Activated CD8-positive, alpha-beta memory T cell treated with anti-CD3 and anti-CD28 coated beads, Interleukin-2, amount 10 ng/mL, durations not matched to agents 7 days and 5 days (primary cell): ENCODE measurements at regions of chr19 and their contacts with region 1.

Region 1: DNA sequence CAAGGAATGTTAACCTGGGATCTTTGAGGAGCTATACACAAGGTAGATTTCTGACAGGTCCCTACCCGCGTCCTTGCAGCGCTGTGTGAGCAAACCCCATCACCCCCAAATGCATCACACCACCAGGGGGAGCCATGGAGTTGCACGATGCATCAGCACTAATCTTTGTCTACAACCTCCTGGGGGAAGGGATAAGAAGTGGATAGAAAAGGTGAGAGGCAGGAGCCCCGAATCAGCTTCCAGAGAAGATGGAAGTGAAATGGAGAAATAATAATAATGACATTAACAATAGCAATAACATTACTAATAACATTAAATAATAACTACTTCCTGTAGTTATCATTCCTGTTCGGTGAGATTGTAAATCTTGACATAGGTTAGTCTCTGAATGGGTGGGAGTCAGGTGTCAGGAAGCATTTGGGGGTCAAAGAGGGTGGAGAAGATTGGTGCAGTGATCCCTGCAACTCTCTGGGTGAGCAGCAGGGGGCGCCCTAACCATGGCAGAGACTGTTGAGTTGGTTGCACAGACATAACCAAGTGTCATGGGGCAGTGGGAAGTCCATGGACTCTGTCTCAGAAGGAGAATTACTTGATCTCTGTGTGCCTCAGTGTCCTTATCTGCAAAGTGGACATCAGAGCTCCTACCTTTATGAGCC is 16.5 kb downstream of the SIGLEC7 start:
- DNase-seq: peak; percentile 89
- ATAC-seq: peak; percentile 87
- H3K4me3 Mint-ChIP-seq: no peak overlapping the region
- H3K27ac Mint-ChIP-seq: peak overlapping the region; percentile 53
- H3K4me1 Mint-ChIP-seq: peaks cover 40% of the 10 kb centered on the region
- H3K27me3 Mint-ChIP-seq: peaks cover 48% of the 10 kb centered on the region

Region 2: DNA sequence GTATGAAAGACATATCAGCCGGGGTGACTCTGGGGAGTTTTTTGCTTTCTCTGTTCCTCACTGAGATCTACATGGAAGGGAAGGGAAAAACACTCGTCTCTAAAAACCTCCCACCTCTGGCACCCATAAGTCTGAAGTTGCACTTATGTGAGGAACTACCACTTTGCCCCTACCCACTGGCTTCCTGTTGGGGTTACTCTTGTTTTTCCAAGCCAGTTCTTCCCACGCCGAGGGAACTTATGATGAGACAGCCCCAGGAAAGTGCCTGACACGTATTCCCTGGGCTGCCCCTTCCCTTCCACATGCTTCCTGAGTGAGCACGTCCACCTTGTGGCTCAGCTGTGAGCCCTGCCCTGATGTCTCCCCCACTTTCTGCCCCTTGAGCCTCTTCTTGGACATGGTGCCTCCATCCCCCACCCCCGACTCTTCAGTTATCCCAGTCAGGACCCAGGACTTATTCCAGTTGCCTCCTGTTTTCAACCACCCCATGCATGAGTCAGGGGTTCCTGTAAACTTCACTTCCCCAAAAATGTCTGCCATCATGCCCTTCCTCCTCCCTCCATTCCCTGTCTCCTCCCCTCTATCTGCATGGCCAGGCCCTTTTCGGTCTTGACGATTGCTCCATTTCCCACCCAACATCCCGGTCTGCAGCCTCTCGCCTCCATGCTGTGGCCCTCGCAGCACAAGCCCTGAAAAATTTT is 21.6 kb before region 1 on chr19:
- CTCF ChIA-PET with region 1: interaction called, 22 read pairs
- DNase-seq: no peak
- ATAC-seq: no peak
- H3K4me3 Mint-ChIP-seq: no peak overlapping the region
- H3K27ac Mint-ChIP-seq: no peak overlapping the region
- H3K4me1 Mint-ChIP-seq: peaks cover 11% of the 10 kb centered on the region
- H3K27me3 Mint-ChIP-seq: peaks cover 59% of the 10 kb centered on the region

Region 3: DNA sequence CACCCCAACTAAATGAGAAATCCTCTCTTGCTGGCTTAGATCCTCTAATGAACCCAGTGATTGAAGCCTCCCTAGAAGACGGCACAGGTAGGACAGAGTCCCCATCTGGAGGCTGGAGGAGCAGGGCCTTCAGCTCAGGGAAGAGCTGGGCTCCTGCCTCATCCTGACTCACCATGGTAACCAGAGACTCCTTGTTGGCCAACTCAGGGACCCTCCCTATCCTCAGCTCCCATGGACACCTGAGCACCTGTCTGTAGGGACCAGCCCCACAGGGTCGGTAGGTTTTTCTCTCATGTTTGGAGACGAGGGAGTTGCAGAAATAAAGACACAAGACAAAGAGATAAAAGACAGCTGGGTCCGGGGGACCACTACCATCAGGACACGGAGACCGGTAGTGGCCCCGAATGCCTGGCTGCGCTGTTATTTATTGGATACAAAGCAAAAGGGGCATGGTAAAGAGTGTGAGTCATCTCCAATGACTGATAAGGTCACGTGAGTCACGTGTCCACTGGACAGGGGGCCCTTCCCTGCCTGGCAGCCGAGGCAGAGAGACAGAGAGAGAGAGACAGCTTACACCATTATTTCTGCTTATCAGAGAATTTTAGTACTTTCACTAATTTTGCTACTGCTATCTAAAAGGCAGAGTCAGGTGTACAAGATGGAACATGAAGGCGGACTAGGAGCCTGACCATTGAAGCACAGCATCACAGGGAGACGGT is 10.1 kb after region 1 on chr19:
- CTCF ChIA-PET with region 1: interaction called, 45 read pairs
- DNase-seq: no peak
- ATAC-seq: no peak
- H3K4me3 Mint-ChIP-seq: peak overlapping the region; percentile 84
- H3K27ac Mint-ChIP-seq: peak overlapping the region; percentile 37
- H3K4me1 Mint-ChIP-seq: peaks cover 52% of the 10 kb centered on the region
- H3K27me3 Mint-ChIP-seq: peaks cover 37% of the 10 kb centered on the region

Region 4: GRCh38 chr19:51246164-51246552 is 87.6 kb after region 1 on chr19:
- CTCF ChIA-PET with region 1: interaction called, 11 read pairs
- DNase-seq: peak; percentile 65
- ATAC-seq: peak; percentile 61
- H3K4me3 Mint-ChIP-seq: peak overlapping the region; percentile 47
- H3K27ac Mint-ChIP-seq: peak overlapping the region; percentile 84
- H3K4me1 Mint-ChIP-seq: peaks cover 66% of the 10 kb centered on the region
- H3K27me3 Mint-ChIP-seq: peaks cover 22% of the 10 kb centered on the region

Region 5: GRCh38 chr19:51259348-51260245 is 101.0 kb after region 1 on chr19:
- CTCF ChIA-PET with region 1: interaction called, 204 read pairs
- DNase-seq: peak; percentile 83
- ATAC-seq: peak; percentile 38
- H3K4me3 Mint-ChIP-seq: no peak overlapping the region
- H3K27ac Mint-ChIP-seq: no peak overlapping the region
- H3K4me1 Mint-ChIP-seq: peaks cover 41% of the 10 kb centered on the region
- H3K27me3 Mint-ChIP-seq: peaks cover 37% of the 10 kb centered on the region